AG04449 (cell line): ENCODE measurements at regions of chr1 and their contacts with region 1.

Region 1: GRCh38 chr1:85297855-85298629 is 21.6 kb upstream of the BCL10 start:
- DNase-seq: peak; percentile 96
- H3K4me3 ChIP-seq: peak overlapping the region; percentile 2
- CTCF ChIP-seq: no peak

Region 2: DNA sequence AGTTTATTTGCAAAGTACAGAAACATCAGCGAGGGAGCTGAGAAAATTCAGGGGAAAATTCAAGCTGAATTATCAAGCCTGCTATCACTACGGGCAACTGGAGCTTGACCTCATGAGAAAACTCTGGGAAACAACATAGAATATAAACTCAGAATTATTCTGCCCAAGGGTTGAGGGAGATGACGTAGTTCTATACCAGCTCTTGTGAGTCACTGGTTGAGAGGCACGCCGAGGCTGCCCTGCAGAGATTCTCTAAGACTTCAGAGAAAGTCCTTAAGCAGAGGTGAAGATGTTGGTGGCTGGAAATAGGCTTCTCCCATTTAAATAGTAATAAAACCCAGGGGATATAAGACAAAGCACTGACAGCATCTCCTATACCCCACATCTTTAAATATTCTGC is 109.5 kb before region 1 on chr1:
- CTCF ChIA-PET with region 1: no interaction called
- POLR2A ChIA-PET with region 1: no interaction called
- DNase-seq: no peak
- H3K4me3 ChIP-seq: no peak overlapping the region
- CTCF ChIP-seq: no peak

Region 3: DNA sequence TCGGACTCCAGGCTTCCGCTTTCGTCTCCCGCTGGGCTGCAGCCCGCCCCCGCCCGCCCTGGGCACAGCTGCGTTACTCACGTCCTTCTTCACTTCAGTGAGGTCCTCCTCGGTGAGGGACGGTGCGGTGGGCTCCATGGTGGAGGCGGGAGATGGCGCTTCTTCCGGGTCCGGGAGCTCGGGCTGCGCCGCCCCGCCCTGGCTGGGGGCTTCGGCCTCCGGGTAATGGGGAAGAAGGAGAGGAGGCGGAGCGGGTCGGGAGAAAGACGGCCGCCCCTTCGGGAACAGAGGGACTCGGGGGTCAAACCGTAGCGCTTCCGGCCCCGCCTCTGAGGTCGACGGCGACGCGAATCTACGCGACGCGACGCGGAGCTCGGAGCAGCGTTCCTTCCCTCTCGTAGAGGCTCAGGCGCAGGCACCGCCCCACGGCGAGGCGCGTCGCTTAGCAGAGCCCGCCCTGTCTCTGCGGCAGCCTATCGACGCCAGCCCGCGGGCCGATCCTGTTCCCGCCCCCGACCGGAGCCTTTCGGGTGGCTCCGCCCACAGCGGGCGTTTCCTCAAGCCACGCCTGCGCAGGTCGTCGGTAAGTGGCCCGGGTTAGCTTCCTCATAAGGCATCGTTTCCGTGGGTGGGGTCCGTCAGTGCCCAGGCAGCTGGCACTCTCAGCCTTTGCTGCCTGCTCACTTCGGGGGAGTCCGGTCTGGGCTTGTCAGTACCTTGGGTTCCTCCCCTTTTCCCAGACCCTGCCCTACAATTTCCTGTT is 21.6 kb before region 1 on chr1 and contains the start of gene BCL10:
- CTCF ChIA-PET with region 1: interaction called, 10 read pairs
- POLR2A ChIA-PET with region 1: interaction called, 6 read pairs
- DNase-seq: peak; percentile 82
- H3K4me3 ChIP-seq: peak within 1 kb of the TSS; percentile 94
- CTCF ChIP-seq: no peak